Mammary epithelial cell (primary cell): ENCODE measurements at regions of chr6 and their contacts with region 1.

Region 1: GRCh38 chr6:6494677-6495076 is 93.8 kb upstream of the LY86 start:
- DNase-seq: peak; percentile 39
- H3K4me3 ChIP-seq: no peak overlapping the region
- H3K27ac ChIP-seq: no peak overlapping the region
- H3K4me1 ChIP-seq: no peaks in the 10 kb centered on the region
- H3K27me3 ChIP-seq: no peaks in the 10 kb centered on the region
- CTCF ChIP-seq: peak; percentile 62 to 75

Region 2: DNA sequence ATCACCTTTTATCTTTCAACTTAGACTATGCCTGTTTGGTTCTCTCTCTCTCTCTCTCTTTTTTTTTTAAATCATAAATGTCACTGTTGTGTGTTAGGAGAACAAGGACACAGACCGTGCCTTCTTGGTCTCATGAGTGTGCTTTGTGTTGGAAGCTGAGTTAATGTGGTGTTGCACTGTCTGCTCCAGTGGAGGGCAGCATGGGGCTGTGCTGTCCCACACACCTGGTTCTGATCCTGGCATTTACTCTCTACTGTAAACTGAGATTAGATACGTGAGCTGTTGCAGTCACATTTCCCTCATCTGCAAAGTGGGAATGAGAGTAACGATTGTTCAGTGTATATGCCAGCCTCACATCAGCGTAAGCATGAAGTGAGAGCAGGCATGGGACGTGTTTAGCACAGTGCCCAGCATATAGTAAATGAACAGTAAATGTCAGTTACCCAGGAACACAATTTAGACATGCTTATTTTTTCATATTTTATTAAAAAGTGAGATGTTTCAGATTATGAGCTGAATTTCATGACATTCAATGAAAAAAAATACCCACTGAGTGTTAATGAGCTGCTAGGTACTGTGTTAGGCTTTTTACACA is 1072.3 kb before region 1 on chr6:
- CTCF ChIA-PET with region 1: no interaction called
- dilution Hi-C with region 1: no loop called
- in situ Hi-C with region 1: no loop called
- intact Hi-C with region 1: loop called (anchors 2 kb)
- DNase-seq: peak; percentile 14
- H3K4me3 ChIP-seq: no peak overlapping the region
- H3K27ac ChIP-seq: no peak overlapping the region
- H3K4me1 ChIP-seq: no peaks in the 10 kb centered on the region
- H3K27me3 ChIP-seq: no peaks in the 10 kb centered on the region
- CTCF ChIP-seq: peak; percentile 64 to 78

Region 3: DNA sequence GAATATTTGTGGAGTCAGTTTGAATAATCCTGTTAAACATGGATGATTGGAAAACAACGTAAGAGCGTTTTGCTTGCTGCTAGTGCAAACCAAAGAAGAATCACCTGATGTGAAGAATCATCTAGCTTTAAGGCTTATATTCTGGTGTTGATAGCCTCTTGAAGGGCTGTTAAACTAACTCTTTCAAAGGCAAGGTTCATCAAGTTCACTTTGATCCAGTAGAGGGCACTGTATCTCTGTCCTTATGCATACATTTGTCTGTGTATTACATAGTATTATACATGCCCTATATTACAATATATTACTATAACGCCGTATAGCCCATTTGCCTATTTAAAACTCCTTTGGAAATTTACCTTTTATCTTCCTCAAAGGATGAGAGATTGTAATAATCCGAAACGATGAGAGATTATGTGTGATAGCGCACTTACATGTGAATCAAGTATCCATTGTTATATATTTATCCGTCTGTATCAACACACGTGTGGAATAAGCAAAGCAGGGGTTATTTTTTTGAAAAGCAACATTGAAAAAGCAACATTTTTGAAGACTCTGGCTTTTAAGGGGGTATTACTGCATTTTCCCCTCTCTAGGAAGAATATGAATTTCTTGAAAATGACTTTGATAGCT is 437.1 kb before region 1 on chr6:
- CTCF ChIA-PET with region 1: interaction called, 6 read pairs
- dilution Hi-C with region 1: no loop called
- in situ Hi-C with region 1: no loop called
- intact Hi-C with region 1: loop called (anchors 1 kb)
- DNase-seq: peak; percentile 36
- H3K4me3 ChIP-seq: no peak overlapping the region
- H3K27ac ChIP-seq: no peak overlapping the region
- H3K4me1 ChIP-seq: no peaks in the 10 kb centered on the region
- H3K27me3 ChIP-seq: no peaks in the 10 kb centered on the region
- CTCF ChIP-seq: peak; percentile 62 to 65

Region 4: GRCh38 chr6:6105472-6106036 is 389.1 kb before region 1 on chr6:
- CTCF ChIA-PET with region 1: no interaction called
- dilution Hi-C with region 1: no loop called
- in situ Hi-C with region 1: no loop called
- intact Hi-C with region 1: loop called (anchors 1 kb)
- DNase-seq: no peak
- H3K4me3 ChIP-seq: no peak overlapping the region
- H3K27ac ChIP-seq: no peak overlapping the region
- H3K4me1 ChIP-seq: no peaks in the 10 kb centered on the region
- H3K27me3 ChIP-seq: no peaks in the 10 kb centered on the region
- CTCF ChIP-seq: peak; percentile 15 to 45

Region 5: DNA sequence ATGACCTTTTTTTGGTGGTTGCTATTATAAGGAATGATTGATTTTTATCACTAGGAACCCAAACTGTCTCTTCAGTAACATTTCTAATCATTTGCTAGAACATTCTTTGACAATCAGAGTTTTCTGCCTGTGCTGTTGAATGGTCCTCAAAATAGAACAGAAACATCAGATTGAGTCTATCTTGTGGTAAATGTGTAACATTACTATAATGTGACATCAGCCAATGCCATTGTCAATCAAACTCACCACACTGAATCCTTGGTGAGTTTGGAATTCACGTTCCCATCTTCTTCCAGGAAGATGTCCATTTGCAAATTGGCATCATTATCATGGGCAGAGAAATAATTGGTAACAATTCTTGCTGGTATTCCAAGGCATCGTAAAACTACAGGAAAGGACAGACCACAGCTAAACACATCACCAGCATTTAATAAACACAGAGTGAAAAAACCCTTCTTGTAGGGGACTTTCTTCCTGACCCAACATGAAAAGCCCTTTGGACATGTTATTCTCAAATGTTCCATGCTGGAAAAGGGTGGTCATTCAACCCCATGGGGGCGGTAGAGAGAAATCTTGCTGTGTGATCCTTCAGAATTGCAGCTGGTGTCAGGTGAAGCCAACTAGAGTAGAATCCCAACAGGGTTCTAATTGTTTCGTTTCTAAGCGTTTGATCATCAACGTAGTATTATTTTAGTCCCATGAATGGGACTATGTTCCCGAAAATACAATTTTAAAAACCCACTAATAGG is 272.7 kb before region 1 on chr6:
- CTCF ChIA-PET with region 1: interaction called, 3 read pairs
- dilution Hi-C with region 1: no loop called
- in situ Hi-C with region 1: no loop called
- intact Hi-C with region 1: loop called (anchors 1 kb)
- DNase-seq: no peak
- H3K4me3 ChIP-seq: no peak overlapping the region
- H3K27ac ChIP-seq: no peak overlapping the region
- H3K4me1 ChIP-seq: no peaks in the 10 kb centered on the region
- H3K27me3 ChIP-seq: no peaks in the 10 kb centered on the region
- CTCF ChIP-seq: peak; percentile 32 to 36

Region 6: DNA sequence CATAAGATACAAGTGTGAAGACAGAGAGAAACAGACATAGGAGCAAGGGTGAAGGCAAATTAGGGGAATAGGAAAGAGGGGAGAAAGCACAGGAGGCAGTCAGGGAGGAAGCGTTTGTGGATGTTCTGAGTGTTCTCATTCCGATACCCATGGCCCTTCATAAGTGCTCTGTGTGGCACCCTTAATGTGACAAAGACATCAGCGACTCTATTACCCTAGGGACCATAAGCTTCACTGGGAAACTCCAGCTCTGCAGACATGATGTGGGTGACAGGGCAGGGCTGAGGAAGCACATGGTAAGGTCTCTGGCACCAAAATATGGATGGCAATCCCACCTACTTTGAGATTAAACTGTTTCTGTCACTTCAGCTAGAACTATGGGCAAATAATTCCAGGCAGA is 207.3 kb before region 1 on chr6:
- CTCF ChIA-PET with region 1: no interaction called
- dilution Hi-C with region 1: no loop called
- in situ Hi-C with region 1: no loop called
- intact Hi-C with region 1: no loop called
- DNase-seq: no peak
- H3K4me3 ChIP-seq: no peak overlapping the region
- H3K27ac ChIP-seq: no peak overlapping the region
- H3K4me1 ChIP-seq: no peaks in the 10 kb centered on the region
- H3K27me3 ChIP-seq: peaks cover 2% of the 10 kb centered on the region
- CTCF ChIP-seq: no peak

Region 7: DNA sequence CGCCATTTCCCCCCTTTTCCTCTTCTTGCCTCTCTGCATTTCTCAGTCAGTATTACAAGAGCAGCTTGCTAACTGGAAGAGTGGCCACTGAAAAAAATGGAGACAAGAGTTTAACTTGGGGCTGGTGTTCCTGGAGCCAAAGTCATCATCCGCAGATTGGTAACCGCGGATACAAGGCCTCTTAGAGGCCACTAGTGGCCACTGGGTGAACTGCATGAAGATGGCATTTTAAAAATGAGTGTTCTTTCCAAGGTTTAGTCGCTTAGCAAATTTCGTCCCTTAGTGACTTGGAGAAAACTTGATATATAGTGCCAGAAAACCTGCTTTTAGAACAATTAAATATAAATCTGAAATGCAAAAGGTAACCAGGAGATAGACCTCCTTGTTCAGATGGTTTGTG is 179.0 kb before region 1 on chr6:
- CTCF ChIA-PET with region 1: no interaction called
- dilution Hi-C with region 1: no loop called
- in situ Hi-C with region 1: no loop called
- intact Hi-C with region 1: loop called (anchors 1 kb)
- DNase-seq: peak; percentile 20
- H3K4me3 ChIP-seq: no peak overlapping the region
- H3K27ac ChIP-seq: no peak overlapping the region
- H3K4me1 ChIP-seq: peaks cover 3% of the 10 kb centered on the region
- H3K27me3 ChIP-seq: peaks cover 17% of the 10 kb centered on the region
- CTCF ChIP-seq: peak; percentile 72 to 86

Region 8: DNA sequence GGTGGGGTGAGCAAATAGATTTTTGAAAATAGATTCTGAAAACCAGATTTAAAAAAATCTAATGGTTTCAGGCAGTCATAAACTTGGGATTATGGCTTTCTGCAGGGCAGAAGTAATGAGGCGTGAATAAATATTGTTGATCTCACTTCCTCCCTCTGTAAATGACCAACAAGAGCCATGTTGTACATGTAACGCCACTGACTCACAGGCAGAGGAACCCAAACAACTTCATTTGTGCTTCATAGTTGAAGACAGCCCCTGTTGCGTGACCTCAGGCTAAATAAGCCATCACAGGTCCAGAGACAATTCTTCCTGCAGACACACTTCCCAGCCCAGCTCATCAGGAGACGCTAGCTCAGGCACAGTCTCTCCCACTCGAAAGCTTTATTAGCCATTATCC is 115.1 kb before region 1 on chr6:
- CTCF ChIA-PET with region 1: no interaction called
- dilution Hi-C with region 1: no loop called
- in situ Hi-C with region 1: no loop called
- intact Hi-C with region 1: loop called (anchors 1 kb)
- DNase-seq: no peak
- H3K4me3 ChIP-seq: no peak overlapping the region
- H3K27ac ChIP-seq: no peak overlapping the region
- H3K4me1 ChIP-seq: no peaks in the 10 kb centered on the region
- H3K27me3 ChIP-seq: peaks cover 3% of the 10 kb centered on the region
- CTCF ChIP-seq: no peak

Region 9: GRCh38 chr6:6993503-6994237 is 499.0 kb after region 1 on chr6:
- CTCF ChIA-PET with region 1: no interaction called
- dilution Hi-C with region 1: no loop called
- in situ Hi-C with region 1: no loop called
- intact Hi-C with region 1: no loop called
- DNase-seq: no peak
- H3K4me3 ChIP-seq: no peak overlapping the region
- H3K27ac ChIP-seq: no peak overlapping the region
- H3K4me1 ChIP-seq: no peaks in the 10 kb centered on the region
- H3K27me3 ChIP-seq: no peaks in the 10 kb centered on the region
- CTCF ChIP-seq: no peak